Stomach (tissue), 19 donors: ENCODE measurements at regions of chr4 and their contacts with region 1.

Region 1: GRCh38 chr4:125244848-125245450 is 69.8 kb upstream of the FAT4 start:
- DNase-seq: peak in 1 of 2 donors; percentile 37
- H3K4me3 ChIP-seq: no peak overlapping the region
- H3K27ac ChIP-seq: no peak overlapping the region
- H3K4me1 ChIP-seq: no peaks in the 10 kb centered on the region
- H3K27me3 ChIP-seq: no peaks in the 10 kb centered on the region
- CTCF ChIP-seq: peak in 3 of 7 experiments; percentile 16 to 40 (median 29)
- EP300 ChIP-seq: no peak
- POLR2A ChIP-seq: no peak

Region 2: DNA sequence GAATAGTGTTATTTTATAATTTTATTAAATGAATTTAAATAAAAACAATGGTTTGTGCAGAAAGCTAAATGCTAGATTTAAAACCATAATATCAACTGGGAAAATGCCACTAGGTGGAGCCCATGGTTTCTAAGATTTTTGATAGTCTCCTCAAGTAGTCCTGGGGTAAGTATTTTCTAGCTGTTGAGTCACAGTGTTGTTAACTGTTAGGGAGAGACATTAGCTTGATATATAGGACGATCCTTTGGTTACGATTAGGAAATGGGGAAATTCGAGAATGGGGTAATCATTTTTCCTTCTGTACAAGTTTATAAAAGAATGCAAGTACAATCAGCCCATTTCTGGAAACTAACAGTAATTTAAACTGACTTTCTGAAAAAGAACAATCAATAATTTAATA is 910.8 kb before region 1 on chr4:
- intact Hi-C with region 1: loop called (anchors 10 kb)
- DNase-seq: peak in 1 of 2 donors; percentile 83
- H3K4me3 ChIP-seq: no peak overlapping the region
- H3K27ac ChIP-seq: no peak overlapping the region
- H3K4me1 ChIP-seq: peaks cover 0 to 7% (median 2%) of the 10 kb centered on the region in 4 donors
- H3K27me3 ChIP-seq: no peaks in the 10 kb centered on the region
- CTCF ChIP-seq: peak in 5 of 7 experiments; percentile 26 to 59 (median 40)
- EP300 ChIP-seq: no peak
- POLR2A ChIP-seq: no peak

Region 3: GRCh38 chr4:124903995-124904722 is 340.8 kb before region 1 on chr4:
- intact Hi-C with region 1: no loop called
- DNase-seq: peak; percentile 62 to 80
- H3K4me3 ChIP-seq: peak overlapping the region; percentile 14 to 26 (median 24)
- H3K27ac ChIP-seq: peak overlapping the region; percentile 48 to 87 (median 56)
- H3K4me1 ChIP-seq: peaks cover 0 to 16% (median 12%) of the 10 kb centered on the region in 4 donors
- H3K27me3 ChIP-seq: no peaks in the 10 kb centered on the region
- CTCF ChIP-seq: no peak
- EP300 ChIP-seq: no peak
- POLR2A ChIP-seq: no peak

Region 4: GRCh38 chr4:125582302-125582701 is 337.4 kb after region 1 on chr4:
- intact Hi-C with region 1: no loop called
- DNase-seq: no peak
- H3K4me3 ChIP-seq: no peak overlapping the region
- H3K27ac ChIP-seq: no peak overlapping the region
- H3K4me1 ChIP-seq: no peaks in the 10 kb centered on the region
- H3K27me3 ChIP-seq: no peaks in the 10 kb centered on the region
- CTCF ChIP-seq: no peak
- EP300 ChIP-seq: no peak
- POLR2A ChIP-seq: no peak